Activated naive CD4-positive, alpha-beta T cell treated with anti-CD3 and anti-CD28 coated beads for 36 hours (primary cell): ENCODE measurements at regions of chr3 and their contacts with region 1.

Region 1: DNA sequence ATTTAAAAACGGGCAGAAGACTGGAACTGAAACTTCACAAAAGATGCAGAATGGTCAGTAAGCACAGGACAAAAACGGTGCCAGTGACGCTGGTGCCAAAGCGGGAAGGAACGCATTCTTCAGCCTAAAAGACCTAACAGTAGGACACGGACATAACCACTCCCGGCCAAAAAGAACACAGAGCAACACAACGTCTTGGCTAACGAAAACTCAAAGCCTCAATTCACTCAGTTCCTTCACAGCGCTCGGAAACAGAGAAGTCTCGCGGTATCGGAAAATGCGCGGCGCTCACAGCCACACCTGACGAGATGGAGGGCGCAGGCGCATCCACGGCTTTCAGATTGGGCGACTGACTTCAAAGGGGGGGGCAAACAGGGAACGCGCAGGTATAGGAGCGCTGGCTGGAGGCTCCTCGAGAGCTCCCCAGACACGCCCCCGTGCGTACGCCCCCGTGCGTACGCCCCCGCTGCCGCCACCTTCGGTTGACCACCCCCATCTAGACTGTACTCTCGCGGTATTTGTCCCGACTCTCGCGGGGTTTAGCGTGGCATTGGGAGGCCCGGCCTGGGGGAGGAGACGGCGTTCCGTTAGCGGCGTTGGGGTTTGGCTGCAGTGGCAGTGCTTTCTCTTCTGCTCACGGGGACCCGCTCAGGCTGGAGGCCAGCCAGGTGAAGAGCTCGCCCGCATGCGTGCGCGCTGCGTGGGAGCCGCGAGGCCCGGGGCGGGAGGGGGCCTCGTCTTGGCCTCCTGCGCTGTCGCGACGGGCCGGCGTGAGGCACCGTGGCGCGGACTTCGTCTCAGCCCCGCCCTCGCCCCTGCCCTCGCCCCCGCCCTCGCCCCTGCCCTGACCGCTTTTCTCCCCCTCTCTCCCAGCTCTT is at the start of gene NKTR:
- DNase-seq: peak; percentile 99
- H3K4me3 Mint-ChIP-seq: peak within 1 kb of the TSS; percentile 96
- H3K27ac Mint-ChIP-seq: peak within 1 kb of the TSS; percentile 99
- H3K4me1 Mint-ChIP-seq: peaks cover 27% of the 10 kb centered on the region
- H3K27me3 Mint-ChIP-seq: no peaks in the 10 kb centered on the region
- total RNA-seq, gene NKTR: 62.1 to 65.9 TPM

Region 2: DNA sequence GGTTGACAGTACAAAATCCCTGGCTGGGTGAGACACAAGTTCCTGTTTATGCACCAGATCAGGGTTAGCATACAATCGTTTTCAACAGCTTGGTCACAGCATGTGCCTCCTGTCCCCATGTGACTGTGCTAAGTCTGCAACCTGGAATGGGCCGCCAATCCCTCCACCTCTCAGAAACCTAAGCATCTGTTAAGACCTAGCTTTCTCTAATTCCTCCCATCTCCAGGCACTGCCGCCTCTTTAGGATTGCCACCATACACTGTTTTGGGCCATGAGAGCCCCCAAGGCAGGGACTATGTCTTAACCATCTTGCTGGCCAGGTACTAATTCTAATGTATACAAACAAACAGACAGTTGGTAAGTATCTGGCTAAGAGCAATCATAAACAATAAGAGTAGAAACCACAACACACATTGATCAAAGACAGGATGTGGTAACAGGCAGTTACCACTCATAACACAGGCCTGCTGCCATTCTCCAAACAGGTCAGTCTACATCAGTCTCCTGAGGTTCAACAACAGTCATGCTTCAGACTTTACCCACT is 44.2 kb before region 1 on chr3:
- CTCF ChIA-PET with region 1: no interaction called
- intact Hi-C with region 1: loop called (anchors 1 kb)
- DNase-seq: peak; percentile 53
- H3K4me3 Mint-ChIP-seq: no peak overlapping the region
- H3K27ac Mint-ChIP-seq: peak overlapping the region; percentile 80
- H3K4me1 Mint-ChIP-seq: peaks cover 24% of the 10 kb centered on the region
- H3K27me3 Mint-ChIP-seq: no peaks in the 10 kb centered on the region

Region 3: DNA sequence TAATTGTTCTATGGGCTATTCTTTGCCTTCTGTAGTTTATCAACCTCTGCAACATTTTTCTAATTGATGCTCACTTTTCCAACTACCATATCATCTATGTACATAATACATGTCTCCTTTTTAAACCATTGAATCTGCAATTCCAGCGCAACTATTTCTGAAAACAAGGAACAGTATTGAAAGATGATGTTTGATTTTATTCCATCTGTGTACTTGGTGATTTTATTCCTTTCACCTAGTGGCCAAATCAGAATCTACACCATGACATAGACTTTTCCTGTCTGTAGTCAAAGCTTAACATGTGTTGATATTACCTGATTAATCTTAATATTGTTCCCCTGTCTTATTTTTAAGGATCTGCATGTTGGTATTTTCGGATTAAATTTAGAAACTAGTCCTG is 13.1 kb after region 1 on chr3:
- CTCF ChIA-PET with region 1: interaction called, 9 read pairs
- intact Hi-C with region 1: loop called (anchors 1 kb)
- DNase-seq: no peak
- H3K4me3 Mint-ChIP-seq: no peak overlapping the region
- H3K27ac Mint-ChIP-seq: peak overlapping the region; percentile 2
- H3K4me1 Mint-ChIP-seq: peaks cover 59% of the 10 kb centered on the region
- H3K27me3 Mint-ChIP-seq: no peaks in the 10 kb centered on the region

Region 4: DNA sequence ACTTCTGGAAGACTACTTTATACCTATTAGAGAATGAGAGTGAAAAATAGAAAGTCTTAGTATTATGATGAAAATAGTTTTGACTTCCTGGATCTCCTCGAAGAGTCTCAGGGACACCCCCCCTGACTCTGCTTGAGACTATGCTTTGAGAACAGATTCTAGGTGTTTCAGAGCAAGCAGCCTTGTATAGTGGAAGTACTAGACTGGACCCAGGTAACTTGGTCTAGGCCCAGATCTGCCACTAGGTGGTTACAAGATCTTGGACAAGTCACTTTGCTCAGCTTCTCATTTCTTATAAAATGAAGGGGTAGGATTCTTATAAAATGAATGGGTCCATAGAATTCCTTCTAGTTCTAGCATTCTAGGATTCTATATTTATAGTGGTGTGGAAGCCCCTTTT is 1099.5 kb after region 1 on chr3:
- CTCF ChIA-PET with region 1: no interaction called
- intact Hi-C with region 1: loop called (anchors 5 kb)
- DNase-seq: peak; percentile 37
- H3K4me3 Mint-ChIP-seq: no peak overlapping the region
- H3K27ac Mint-ChIP-seq: no peak overlapping the region
- H3K4me1 Mint-ChIP-seq: peaks cover 15% of the 10 kb centered on the region
- H3K27me3 Mint-ChIP-seq: no peaks in the 10 kb centered on the region